HepG2 (cell line): ENCODE measurements at regions of chr9 and their contacts with region 1.

Region 1: GRCh38 chr9:3181049-3181953 is 337.4 kb upstream of the PUM3 start:
- DNase-seq: peak; percentile 64
- ATAC-seq: peak; percentile 91
- H3K4me3 ChIP-seq: peak overlapping the region; percentile 32 to 68 (median 34); a peak in 4 of 6 replicates
- H3K27ac ChIP-seq: no peak overlapping the region
- H3K4me1 ChIP-seq: peaks cover 35% of the 10 kb centered on the region
- H3K27me3 ChIP-seq: peaks cover 4 to 9% of the 10 kb centered on the region in 2 experiments; a peak in 4 of 5 replicates
- CTCF ChIP-seq: peak; percentile 99
- EP300 ChIP-seq: no peak
- POLR2A ChIP-seq: no peak
- RAD21 ChIP-seq: peak; percentile 94

Region 2: DNA sequence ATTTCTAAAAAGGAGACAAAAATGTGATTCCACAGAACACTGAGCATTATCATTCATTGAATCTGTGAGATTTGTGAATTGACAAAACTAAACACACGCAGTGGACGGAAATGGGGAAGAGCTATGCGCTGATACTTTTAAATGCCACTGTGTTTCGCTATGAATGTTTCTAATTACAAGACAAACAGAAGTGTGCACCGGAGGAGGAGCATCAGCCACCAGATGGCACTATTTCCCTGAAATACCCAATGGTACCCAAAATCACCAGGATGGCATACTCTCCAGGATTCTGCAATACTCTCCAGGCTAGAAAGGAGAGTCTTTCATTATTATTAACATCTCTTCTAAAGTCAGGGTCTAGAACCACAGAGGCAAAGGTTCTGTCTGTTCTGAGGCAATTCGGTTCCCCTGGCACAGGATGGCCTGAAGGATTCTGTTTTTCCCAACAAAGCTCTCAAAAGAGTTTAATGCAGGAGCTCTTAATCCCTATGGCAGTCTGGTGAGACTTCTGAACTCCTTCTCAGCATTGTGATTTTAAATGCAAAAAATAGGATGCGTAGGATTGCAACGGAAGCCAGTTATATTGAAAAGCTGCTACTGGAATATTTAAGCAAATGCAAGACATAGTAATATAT is 323.6 kb before region 1 on chr9:
- CTCF ChIA-PET with region 1: interaction called, 13 read pairs
- POLR2A ChIA-PET with region 1: interaction called, 4 read pairs
- in situ Hi-C with region 1: loop called (anchors 5 kb)
- intact Hi-C with region 1: loop called (anchors 1 kb)
- DNase-seq: peak; percentile 47
- ATAC-seq: peak; percentile 93
- H3K4me3 ChIP-seq: no peak overlapping the region
- H3K27ac ChIP-seq: no peak overlapping the region
- H3K4me1 ChIP-seq: no peaks in the 10 kb centered on the region
- H3K27me3 ChIP-seq: no peaks in the 10 kb centered on the region; a peak in 1 of 5 replicates
- CTCF ChIP-seq: peak; percentile 83
- EP300 ChIP-seq: no peak
- POLR2A ChIP-seq: no peak
- RAD21 ChIP-seq: peak; percentile 50; the same call in 1 of the 2 replicates

Region 3: DNA sequence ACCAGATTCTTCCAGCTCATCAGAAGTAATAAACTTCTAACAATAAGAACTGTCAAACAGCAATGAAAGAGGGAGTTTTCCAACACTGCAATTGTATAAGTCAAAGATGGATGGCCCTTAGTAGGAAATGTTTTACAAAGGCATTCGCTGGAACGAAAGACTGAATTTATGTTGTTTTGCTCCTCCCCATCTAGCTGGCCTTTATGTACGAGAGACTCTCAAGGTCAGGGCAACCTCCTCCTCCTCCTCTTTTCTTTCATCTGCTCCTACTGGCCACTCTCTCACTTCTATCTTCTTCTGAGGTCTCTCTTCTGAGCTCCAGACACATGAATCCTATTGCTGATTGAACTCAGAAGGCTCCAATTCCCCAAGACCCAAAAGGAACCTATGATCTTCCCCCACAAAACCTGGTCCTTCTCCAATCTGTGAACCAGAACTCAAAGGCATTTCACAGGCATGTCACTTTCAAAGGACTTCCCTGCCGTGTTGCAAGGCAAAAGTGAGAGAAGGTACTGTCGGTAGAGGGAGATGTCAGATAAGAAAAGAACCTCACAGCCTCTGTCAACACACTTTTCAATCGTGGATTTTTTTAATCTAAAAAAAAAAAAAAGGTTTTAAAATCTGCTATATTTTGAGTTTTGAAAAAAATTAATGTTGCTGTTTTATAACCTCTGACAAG is 308.9 kb before region 1 on chr9:
- CTCF ChIA-PET with region 1: interaction called, 12 read pairs
- POLR2A ChIA-PET with region 1: no interaction called
- in situ Hi-C with region 1: no loop called
- intact Hi-C with region 1: loop called (anchors 1 kb)
- DNase-seq: peak; percentile 49
- ATAC-seq: peak; percentile 91
- H3K4me3 ChIP-seq: peak overlapping the region in 1 of 3 experiments; percentile 8; a peak in 2 of 6 replicates
- H3K27ac ChIP-seq: no peak overlapping the region
- H3K4me1 ChIP-seq: peaks cover 18% of the 10 kb centered on the region
- H3K27me3 ChIP-seq: peaks cover 2 to 10% of the 10 kb centered on the region in 2 experiments; a peak in 2 of 5 replicates
- CTCF ChIP-seq: peak; percentile 72
- EP300 ChIP-seq: no peak
- POLR2A ChIP-seq: no peak
- RAD21 ChIP-seq: no peak

Region 4: DNA sequence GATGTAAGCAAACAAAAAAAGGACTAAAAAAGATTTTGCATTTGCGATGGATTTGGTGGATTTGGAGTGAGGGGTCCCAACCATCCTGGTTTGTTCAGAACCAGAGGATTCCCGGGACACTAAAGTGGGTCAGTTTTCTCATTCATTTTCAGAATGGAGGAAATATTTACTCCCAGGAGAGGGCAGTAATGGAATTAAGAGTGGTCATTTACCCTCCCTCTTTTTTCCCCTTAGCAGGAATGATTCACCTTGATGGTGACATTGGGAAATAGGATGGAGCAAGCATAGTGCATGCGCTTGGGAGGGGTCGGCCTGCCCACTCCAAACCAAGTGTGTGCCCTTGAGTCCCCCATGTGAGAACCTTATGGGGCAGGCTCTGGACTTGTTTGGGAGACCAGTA is 173.2 kb before region 1 on chr9:
- CTCF ChIA-PET with region 1: interaction called, 6 read pairs
- POLR2A ChIA-PET with region 1: no interaction called
- in situ Hi-C with region 1: no loop called
- intact Hi-C with region 1: loop called (anchors 1 kb)
- DNase-seq: peak; percentile 20
- ATAC-seq: peak; percentile 68
- H3K4me3 ChIP-seq: no peak overlapping the region
- H3K27ac ChIP-seq: no peak overlapping the region
- H3K4me1 ChIP-seq: no peaks in the 10 kb centered on the region
- H3K27me3 ChIP-seq: no peaks in the 10 kb centered on the region
- CTCF ChIP-seq: peak; percentile 52
- EP300 ChIP-seq: no peak
- POLR2A ChIP-seq: no peak
- RAD21 ChIP-seq: no peak

Region 5: GRCh38 chr9:3150074-3150473 is 31.2 kb before region 1 on chr9:
- CTCF ChIA-PET with region 1: no interaction called
- POLR2A ChIA-PET with region 1: no interaction called
- in situ Hi-C with region 1: no loop called
- intact Hi-C with region 1: loop called (anchors 1 kb)
- DNase-seq: peak; percentile 35
- ATAC-seq: peak; percentile 81
- H3K4me3 ChIP-seq: no peak overlapping the region
- H3K27ac ChIP-seq: peak overlapping the region; percentile 77
- H3K4me1 ChIP-seq: peaks cover 59% of the 10 kb centered on the region
- H3K27me3 ChIP-seq: no peaks in the 10 kb centered on the region
- CTCF ChIP-seq: peak; percentile 23; the same call in 1 of the 2 replicates
- EP300 ChIP-seq: 0 out of 4 replicates have a peak, but pooled peaks of 1 of the 2 experiments have one; percentile 17
- POLR2A ChIP-seq: no peak
- RAD21 ChIP-seq: no peak